ENCODE measurements at regions of chr20 and their contacts with region 1.

Region 1: GRCh38 chr20:24257171-24257570 is 212.3 kb upstream of the SYNDIG1 start:
- DNase-seq: peak; percentile 2
- H3K4me3 ChIP-seq: no peak overlapping the region
- CTCF ChIP-seq: no peak

Region 2: DNA sequence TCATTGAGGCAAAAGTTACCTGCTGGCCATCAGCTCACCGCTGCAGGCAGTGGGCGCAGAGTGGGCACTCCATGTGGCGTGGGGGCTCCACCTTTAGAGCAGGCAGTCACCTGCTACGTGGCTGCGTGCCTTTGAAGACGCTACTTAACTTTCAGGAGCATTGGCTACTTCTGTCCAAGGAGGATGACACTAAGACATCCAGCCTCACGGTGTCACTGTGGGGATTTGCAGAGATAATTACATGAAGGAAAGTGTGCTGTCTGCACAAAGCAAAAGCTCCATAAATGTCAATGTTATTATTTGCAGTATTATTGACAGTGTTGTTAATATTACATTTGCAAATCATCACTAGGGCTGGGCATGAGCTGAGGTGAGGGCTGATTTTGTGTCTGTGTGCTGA is 46.2 kb after region 1 on chr20:
- in situ Hi-C with region 1: no loop called
- DNase-seq: no peak
- H3K4me3 ChIP-seq: no peak overlapping the region
- CTCF ChIP-seq: no peak

Region 3: DNA sequence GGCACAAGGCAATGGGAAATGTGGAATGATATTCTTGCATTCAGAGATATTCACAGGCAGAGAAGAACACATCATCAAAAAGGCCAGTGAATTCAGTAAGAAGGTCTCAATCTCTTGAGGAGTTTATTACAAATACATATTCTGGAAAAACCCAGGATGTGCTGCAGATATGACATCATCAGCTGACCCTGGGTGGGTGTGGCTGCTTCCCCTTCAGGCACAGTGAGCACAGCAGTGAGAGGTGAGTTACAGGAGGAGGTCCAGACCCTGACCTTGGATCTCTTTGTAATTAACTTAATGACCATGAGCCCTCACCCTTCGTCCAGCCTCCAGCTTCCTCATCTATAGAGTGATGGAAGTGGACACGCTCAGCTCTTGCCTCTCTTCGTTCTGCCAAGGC is 64.8 kb after region 1 on chr20:
- in situ Hi-C with region 1: loop called (anchors 5 kb)
- DNase-seq: no peak
- H3K4me3 ChIP-seq: no peak overlapping the region
- CTCF ChIP-seq: no peak

Measured in astrocyte of the cerebellum (primary cell).